ENCODE measurements at regions of chr9 and their contacts with region 1.

Region 1: GRCh38 chr9:127347831-127348779 is 48.9 kb upstream of the SLC2A8 start:
- DNase-seq: no peak
- ATAC-seq: no peak
- H3K4me3 Mint-ChIP-seq: no peak overlapping the region
- H3K27ac Mint-ChIP-seq: no peak overlapping the region
- H3K4me1 Mint-ChIP-seq: no peaks in the 10 kb centered on the region
- H3K27me3 Mint-ChIP-seq: peaks cover 24% of the 10 kb centered on the region

Region 2: DNA sequence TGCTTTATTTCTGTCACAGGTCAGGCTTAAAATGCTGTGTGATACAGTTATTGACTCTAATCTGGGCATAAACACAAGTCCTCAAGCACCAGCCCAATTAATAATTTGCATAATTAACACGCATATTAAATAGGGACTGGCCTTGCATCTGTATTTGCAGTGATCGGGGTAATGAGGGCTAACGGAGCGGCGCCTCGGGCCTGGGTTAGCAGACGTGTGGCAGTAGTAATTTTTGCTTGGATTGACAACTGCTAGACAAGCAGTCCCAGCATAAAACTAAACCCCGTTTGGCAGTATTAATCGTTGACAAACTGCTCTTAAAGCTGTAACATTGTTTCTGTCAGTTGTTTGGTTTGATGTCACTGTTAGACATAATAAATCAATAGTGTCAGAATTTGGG is 1491.8 kb before region 1 on chr9:
- POLR2A ChIA-PET with region 1: interaction called, 11 read pairs
- DNase-seq: no peak
- ATAC-seq: no peak
- H3K4me3 Mint-ChIP-seq: no peak overlapping the region
- H3K27ac Mint-ChIP-seq: no peak overlapping the region
- H3K4me1 Mint-ChIP-seq: peaks cover 5% of the 10 kb centered on the region
- H3K27me3 Mint-ChIP-seq: no peaks in the 10 kb centered on the region